ENCODE measurements at regions of chr3 and their contacts with region 1.

Region 1: DNA sequence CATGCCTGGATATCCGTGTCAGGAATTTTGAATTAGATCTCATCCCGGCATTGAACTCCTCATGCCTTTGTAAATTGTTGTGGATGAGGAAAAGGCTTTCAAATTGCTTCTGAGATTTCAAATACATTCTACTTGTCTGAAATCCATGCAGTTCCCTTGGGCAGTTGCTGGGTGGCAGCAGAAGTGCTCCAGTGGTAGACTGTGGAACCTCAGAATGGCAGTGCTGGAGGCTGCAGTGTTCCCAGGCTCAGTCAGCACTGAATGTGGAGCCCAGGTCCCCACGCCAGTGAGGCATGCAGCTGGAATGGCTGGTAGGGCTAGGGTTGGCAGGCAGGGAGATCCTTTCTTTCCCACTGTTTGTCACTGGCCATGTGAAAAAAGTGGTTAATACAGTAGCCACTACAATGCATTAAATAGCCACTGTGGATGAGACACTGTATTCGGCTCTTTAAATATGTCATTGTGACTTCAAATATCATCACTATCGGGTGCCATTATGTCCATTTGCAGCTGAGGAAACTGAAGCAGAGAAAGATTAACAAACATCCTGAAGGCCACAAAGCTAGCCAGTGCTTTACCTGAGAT is 98.6 kb downstream of the TPRG1 start:
- DNase-seq: peak; percentile 67
- H3K4me3 ChIP-seq: no peak overlapping the region
- H3K27ac ChIP-seq: no peak overlapping the region
- H3K4me1 ChIP-seq: no peaks in the 10 kb centered on the region
- H3K27me3 ChIP-seq: no peaks in the 10 kb centered on the region
- CTCF ChIP-seq: peak; percentile 56

Region 2: DNA sequence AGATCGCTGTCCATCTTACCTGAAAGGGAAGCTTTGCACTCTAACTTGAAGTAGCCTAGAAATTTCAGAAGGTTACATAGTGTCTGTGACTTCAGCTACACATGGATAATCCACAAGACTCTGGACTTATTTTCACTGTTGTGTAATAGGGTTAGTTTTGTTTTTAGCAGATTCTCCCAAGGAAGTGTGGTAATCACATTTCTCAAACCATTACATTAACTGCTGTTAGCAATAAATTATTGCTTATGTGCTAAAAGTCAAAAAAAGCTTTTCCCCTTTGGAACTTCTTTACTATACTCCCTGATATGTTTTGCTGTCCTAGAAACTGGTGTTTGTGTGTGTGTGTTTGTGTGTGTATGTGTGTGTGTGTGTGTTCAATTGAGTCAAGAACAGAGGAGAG is 450.4 kb before region 1 on chr3:
- intact Hi-C with region 1: no loop called
- DNase-seq: no peak
- H3K4me3 ChIP-seq: no peak overlapping the region
- H3K27ac ChIP-seq: no peak overlapping the region
- H3K4me1 ChIP-seq: peaks cover 3% of the 10 kb centered on the region
- H3K27me3 ChIP-seq: no peaks in the 10 kb centered on the region
- CTCF ChIP-seq: no peak

Region 3: DNA sequence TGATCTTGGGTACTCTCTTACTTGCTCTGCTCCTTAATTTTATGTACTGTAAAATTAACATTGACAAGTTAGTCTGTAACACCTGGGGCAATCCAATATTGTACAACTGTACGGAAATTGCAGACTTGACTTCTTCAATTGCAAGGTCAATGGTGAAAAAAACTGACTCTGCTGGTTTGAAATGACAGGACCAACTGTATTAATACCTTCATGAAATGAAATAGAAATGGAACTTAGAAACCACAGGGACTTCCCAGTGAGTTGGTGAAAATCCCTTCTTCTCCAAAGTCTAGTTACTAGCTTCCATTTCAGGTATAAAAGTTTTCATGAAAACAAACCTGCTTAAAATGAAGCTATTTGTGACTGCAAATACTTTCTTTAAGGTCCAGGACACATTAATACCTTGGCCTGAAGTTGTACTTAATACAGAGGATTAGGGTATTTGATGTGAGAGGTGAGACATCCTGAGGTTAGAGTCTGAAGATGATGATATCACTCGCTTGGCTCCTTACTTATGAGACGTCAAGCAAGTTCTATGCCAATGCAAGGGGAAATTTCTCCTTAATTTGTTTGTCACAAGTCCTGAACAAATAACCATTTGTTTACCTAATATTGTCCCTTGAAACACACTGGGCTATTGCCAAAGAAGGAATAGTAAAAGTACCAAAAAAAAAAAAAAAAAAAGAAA is 134.6 kb after region 1 on chr3:
- intact Hi-C with region 1: loop called (anchors 10 kb)
- DNase-seq: no peak
- H3K4me3 ChIP-seq: no peak overlapping the region
- H3K27ac ChIP-seq: no peak overlapping the region
- H3K4me1 ChIP-seq: no peaks in the 10 kb centered on the region
- H3K27me3 ChIP-seq: no peaks in the 10 kb centered on the region
- CTCF ChIP-seq: no peak

Region 4: GRCh38 chr3:189512039-189512438 is 241.7 kb after region 1 on chr3:
- intact Hi-C with region 1: loop called (anchors 10 kb)
- DNase-seq: no peak
- H3K4me3 ChIP-seq: no peak overlapping the region
- H3K27ac ChIP-seq: no peak overlapping the region
- H3K4me1 ChIP-seq: no peaks in the 10 kb centered on the region
- H3K27me3 ChIP-seq: no peaks in the 10 kb centered on the region
- CTCF ChIP-seq: no peak